ENCODE measurements at regions of chr2 and their contacts with region 1.

Region 1: DNA sequence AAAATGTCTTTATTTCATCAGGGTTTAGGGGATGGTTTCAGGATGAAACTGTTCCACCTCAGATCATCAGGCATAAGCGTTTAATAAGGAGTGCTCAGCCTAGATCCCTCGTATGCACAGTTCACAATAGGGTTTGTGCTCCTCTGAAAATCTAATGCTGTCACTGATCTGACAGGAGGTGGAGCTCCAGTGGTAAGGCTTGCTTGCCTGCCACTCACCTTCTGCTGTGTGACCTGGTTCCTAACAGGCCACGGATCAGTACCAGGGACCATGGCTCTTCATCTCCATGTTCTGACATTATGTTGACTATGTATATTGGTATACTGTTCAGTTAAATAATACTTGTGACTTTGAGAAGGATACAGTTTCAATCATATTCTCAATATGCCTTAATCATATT is 41.6 kb downstream of the PPIG start:
- DNase-seq: no peak
- H3K4me3 ChIP-seq: no peak overlapping the region
- H3K27ac ChIP-seq: no peak overlapping the region
- H3K4me1 ChIP-seq: no peaks in the 10 kb centered on the region
- H3K27me3 ChIP-seq: no peaks in the 10 kb centered on the region
- CTCF ChIP-seq: no peak
- EP300 ChIP-seq: no peak
- POLR2A ChIP-seq: no peak
- RAD21 ChIP-seq: no peak

Region 2: GRCh38 chr2:169636440-169637097 is 10.8 kb after region 1 on chr2:
- CTCF ChIA-PET with region 1: no interaction called
- POLR2A ChIA-PET with region 1: interaction called, 10 read pairs
- DNase-seq: no peak
- H3K4me3 ChIP-seq: no peak overlapping the region
- H3K27ac ChIP-seq: no peak overlapping the region
- H3K4me1 ChIP-seq: no peaks in the 10 kb centered on the region
- H3K27me3 ChIP-seq: no peaks in the 10 kb centered on the region
- CTCF ChIP-seq: no peak
- EP300 ChIP-seq: no peak
- POLR2A ChIP-seq: no peak
- RAD21 ChIP-seq: no peak

Measured in H1 (cell line).